Panc1 (cell line): ENCODE measurements at regions of chr2 and their contacts with region 1.

Region 1: DNA sequence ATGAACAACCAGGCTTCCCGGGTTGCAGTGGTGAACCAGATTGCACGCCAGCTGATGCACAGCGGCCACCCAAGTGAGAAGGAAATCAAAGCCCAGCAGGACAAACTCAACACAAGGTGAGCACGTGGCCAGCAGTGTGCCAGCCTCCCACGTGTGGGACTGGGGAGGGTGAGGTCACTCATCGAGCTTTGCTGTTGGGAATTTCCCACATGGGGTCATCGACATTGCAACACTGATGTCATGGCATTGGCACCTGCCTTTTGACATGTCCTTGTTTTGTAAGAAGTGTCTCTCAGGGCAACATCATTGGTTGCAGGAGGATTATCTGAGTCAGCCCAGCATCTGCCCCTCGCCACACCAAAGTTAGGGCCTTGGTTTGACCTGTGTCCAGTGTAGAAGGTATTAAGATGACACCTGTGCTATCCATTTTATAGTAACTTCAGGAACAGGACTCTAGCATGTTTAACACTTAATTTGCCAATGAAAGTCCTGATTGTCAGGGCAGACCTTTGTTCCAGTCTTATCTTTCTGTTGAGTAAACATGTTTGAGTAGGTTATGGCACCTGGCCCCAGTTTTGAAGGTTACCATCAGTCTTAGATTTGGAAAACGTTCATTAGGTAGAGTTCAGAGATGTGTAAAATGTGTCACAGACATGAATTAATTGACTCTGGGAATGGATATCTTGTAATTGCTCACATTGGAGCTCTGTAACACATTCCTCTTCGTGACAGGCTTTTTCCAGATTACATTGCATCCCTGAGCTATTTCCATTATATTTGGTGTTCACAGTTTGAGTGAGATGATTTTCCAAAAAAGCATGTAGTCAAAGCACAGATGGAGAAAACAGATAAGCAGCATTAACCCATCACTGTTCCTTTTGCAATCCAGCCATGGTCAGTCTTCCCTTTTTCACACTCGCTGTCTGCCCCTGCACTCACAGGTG is 93.3 kb upstream of the EML6 start:
- DNase-seq: peak; percentile 35
- ATAC-seq: peak; percentile 21; the same call in 1 of the 2 replicates
- H3K4me3 ChIP-seq: no peak overlapping the region
- H3K27ac ChIP-seq: no peak overlapping the region
- H3K4me1 ChIP-seq: peaks cover 6% of the 10 kb centered on the region; the same call in 1 of the 2 replicates
- H3K27me3 ChIP-seq: no peaks in the 10 kb centered on the region
- CTCF ChIP-seq: no peak

Region 2: DNA sequence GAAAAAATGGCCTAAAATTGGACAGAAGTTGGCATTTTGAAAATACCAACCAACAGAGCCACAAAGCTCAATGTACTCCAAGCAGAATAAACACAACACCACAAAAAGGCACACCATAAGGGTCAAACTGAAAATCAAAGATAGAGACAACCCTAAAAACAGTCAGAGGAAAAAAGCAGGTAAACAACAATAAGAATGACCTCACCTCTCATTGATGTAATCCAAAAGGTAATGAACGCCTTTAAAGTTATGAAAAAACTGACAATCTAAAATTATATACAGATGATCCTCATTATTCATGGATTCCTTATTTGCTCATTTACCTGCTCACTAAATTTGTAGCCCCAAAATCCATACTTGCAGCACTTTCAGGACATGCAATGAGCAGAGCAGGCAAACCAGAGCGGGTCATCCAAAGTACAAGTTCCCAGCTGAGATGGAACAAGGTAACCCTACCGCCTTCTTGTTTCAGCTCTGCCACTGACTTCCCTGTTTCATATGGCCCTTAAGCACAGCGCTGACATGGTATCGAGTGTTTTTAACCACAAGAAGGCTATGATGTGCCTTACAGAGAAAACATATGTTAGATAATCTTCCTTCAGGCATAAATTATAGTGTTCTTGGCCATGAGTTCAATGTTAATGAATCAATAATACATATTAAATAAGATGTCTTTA is 403.0 kb after region 1 on chr2:
- CTCF ChIA-PET with region 1: interaction called, 12 read pairs
- POLR2A ChIA-PET with region 1: no interaction called
- in situ Hi-C with region 1: no loop called
- intact Hi-C with region 1: no loop called
- DNase-seq: no peak
- ATAC-seq: no peak
- H3K4me3 ChIP-seq: no peak overlapping the region
- H3K27ac ChIP-seq: no peak overlapping the region
- H3K4me1 ChIP-seq: peaks cover 52% of the 10 kb centered on the region
- H3K27me3 ChIP-seq: no peaks in the 10 kb centered on the region
- CTCF ChIP-seq: no peak